Naive thymus-derived CD4-positive, alpha-beta T cell (primary cell): ENCODE measurements at regions of chr6 and their contacts with region 1.

Region 1: GRCh38 chr6:11353921-11354389 is 121.5 kb upstream of the NEDD9 start:
- DNase-seq: peak in 8 of 9 donors; percentile 26 to 76 (median 53)
- ATAC-seq: peak; percentile 46
- H3K4me3 ChIP-seq: no peak overlapping the region
- H3K4me3 Mint-ChIP-seq: peak overlapping the region; percentile 22 to 73 (median 62)
- H3K27ac ChIP-seq: peak overlapping the region; percentile 36
- H3K27ac Mint-ChIP-seq: peak overlapping the region; percentile 21 to 88 (median 79)
- H3K4me1 ChIP-seq: peaks cover 23 to 31% of the 10 kb centered on the region in 2 donors
- H3K4me1 Mint-ChIP-seq: peaks cover 63 to 92% (median 85%) of the 10 kb centered on the region in 7 donors
- H3K27me3 ChIP-seq: no peaks in the 10 kb centered on the region
- H3K27me3 Mint-ChIP-seq: no peaks in the 10 kb centered on the region

Region 2: DNA sequence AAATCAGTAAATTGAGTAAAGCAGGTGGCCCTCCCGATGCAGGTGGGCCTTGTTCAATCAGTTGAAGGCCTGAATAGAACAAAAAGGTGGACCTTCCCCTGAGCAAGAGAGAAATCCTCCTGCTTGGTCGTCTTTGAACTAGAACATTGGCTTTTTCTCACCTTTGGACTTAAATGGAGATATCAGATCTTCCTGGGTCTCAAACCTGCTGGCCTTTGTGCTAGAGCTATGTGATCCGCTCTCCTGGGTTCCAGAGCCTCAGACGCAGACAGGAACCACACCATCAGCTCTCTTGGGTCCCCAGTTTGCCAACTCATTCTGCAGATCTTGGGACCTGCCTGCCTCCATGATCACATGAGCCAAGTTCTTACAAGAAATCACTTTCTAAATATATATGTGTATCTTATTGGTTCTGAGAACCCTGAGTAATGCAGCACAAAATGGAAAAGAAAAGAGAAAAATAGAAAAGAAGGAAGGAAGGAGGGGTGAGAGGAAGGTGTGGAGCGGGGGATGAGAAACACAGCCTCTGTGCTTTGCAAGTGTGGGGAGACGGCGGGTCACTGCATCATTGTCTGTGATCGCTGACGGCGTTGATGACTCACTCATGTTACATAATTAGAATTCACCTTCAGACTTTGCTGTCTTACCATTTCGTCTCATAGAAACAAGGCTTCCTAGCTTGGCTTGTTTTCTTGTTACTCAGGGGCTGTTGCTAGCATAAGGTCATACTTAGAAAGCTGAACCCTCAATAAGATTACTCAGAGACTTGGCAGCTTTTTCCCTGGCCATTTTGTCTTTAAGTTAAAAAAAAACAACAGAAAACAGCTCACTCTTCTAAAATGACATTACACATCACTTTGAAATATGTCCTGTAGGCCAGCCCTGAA is 35.8 kb before region 1 on chr6:
- CTCF ChIA-PET with region 1: no interaction called
- POLR2A ChIA-PET with region 1: no interaction called
- intact Hi-C with region 1: loop called in 1 of 2 experiments (anchors 5 kb)
- DNase-seq: peak in 6 of 9 donors; percentile 2 to 53 (median 14)
- ATAC-seq: peak; percentile 90
- H3K4me3 ChIP-seq: no peak overlapping the region
- H3K4me3 Mint-ChIP-seq: peak overlapping the region in 1 of 10 donors; percentile 8
- H3K27ac ChIP-seq: no peak overlapping the region
- H3K27ac Mint-ChIP-seq: peak overlapping the region in 6 of 9 donors; percentile 8 to 62 (median 31)
- H3K4me1 ChIP-seq: peaks cover 0 to 10% of the 10 kb centered on the region in 2 donors
- H3K4me1 Mint-ChIP-seq: peaks cover 13 to 51% (median 30%) of the 10 kb centered on the region in 7 donors
- H3K27me3 ChIP-seq: no peaks in the 10 kb centered on the region
- H3K27me3 Mint-ChIP-seq: no peaks in the 10 kb centered on the region

Region 3: DNA sequence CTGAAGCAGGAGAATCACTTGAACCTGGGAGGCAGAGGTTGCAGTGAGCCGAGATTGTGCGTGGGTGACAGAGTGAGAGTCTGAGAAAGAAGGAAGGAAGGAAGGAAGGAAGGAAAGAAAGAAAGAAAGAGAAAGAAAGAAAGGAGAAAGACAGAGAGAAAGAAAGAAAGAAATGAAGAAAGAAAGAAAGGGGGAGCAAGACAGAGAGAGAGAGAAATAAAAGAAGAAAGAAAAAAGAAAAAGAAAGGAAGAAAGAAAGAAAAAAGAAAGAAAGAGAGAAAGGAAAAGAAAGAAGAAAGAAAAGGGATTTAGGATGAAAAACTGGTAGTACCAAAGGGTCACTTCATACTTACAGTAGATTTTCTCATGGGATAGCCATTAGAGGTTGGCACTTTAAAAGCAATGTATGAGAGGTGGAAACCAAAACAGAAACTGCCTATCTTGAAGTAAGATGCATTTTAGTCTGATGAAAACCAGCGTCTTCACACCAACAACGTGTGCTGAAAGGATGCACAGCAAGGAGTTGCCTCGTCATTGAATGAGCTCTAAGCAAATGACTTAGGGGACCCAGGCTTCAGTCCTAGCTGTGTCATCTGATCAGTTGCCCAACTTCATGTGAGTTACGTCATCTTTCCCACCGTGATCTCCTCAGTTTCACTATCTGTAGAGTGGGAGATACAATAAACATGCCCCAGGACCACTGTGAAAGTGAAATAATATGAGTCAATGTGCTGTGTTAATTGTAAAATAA is 12.4 kb after region 1 on chr6:
- CTCF ChIA-PET with region 1: no interaction called
- POLR2A ChIA-PET with region 1: no interaction called
- intact Hi-C with region 1: loop called in 1 of 2 experiments (anchors 1 kb)
- DNase-seq: peak in 1 of 9 donors; percentile 46
- ATAC-seq: peak; percentile 89
- H3K4me3 ChIP-seq: no peak overlapping the region
- H3K4me3 Mint-ChIP-seq: peak overlapping the region in 8 of 10 donors; percentile 9 to 73 (median 45)
- H3K27ac ChIP-seq: no peak overlapping the region
- H3K27ac Mint-ChIP-seq: peak overlapping the region in 7 of 9 donors; percentile 38 to 90 (median 56)
- H3K4me1 ChIP-seq: peaks cover 0 to 22% of the 10 kb centered on the region in 2 donors
- H3K4me1 Mint-ChIP-seq: peaks cover 50 to 87% (median 77%) of the 10 kb centered on the region in 7 donors
- H3K27me3 ChIP-seq: no peaks in the 10 kb centered on the region
- H3K27me3 Mint-ChIP-seq: no peaks in the 10 kb centered on the region

Region 4: GRCh38 chr6:11414176-11414963 is 60.4 kb after region 1 on chr6:
- CTCF ChIA-PET with region 1: no interaction called
- POLR2A ChIA-PET with region 1: no interaction called
- intact Hi-C with region 1: loop called in 1 of 2 experiments (anchors 2 kb)
- DNase-seq: peak in 6 of 9 donors; percentile 11 to 30 (median 18)
- ATAC-seq: peak; percentile 77
- H3K4me3 ChIP-seq: no peak overlapping the region
- H3K4me3 Mint-ChIP-seq: no peak overlapping the region
- H3K27ac ChIP-seq: no peak overlapping the region
- H3K27ac Mint-ChIP-seq: peak overlapping the region in 1 of 9 donors; percentile 10
- H3K4me1 ChIP-seq: peaks cover 0 to 4% of the 10 kb centered on the region in 2 donors
- H3K4me1 Mint-ChIP-seq: peaks cover 6 to 45% (median 10%) of the 10 kb centered on the region in 7 donors
- H3K27me3 ChIP-seq: no peaks in the 10 kb centered on the region
- H3K27me3 Mint-ChIP-seq: no peaks in the 10 kb centered on the region